ENCODE measurements at regions of chr2 and their contacts with region 1.

Region 1: GRCh38 chr2:72993147-72993932 is 76.0 kb downstream of the EMX1 start:
- DNase-seq: peak in 1 of 3 donors; percentile 68
- ATAC-seq: peak; percentile 54
- H3K4me3 ChIP-seq: no peak overlapping the region
- H3K4me1 ChIP-seq: no peaks in the 10 kb centered on the region
- CTCF ChIP-seq: peak; percentile 52

Region 2: GRCh38 chr2:73163483-73164367 is 170.4 kb after region 1 on chr2:
- intact Hi-C with region 1: loop called in 1 of 2 experiments (anchors 5 kb)
- DNase-seq: peak in 2 of 3 donors; percentile 73 to 74
- ATAC-seq: peak; percentile 88
- H3K4me3 ChIP-seq: no peak overlapping the region
- H3K4me1 ChIP-seq: no peaks in the 10 kb centered on the region
- CTCF ChIP-seq: peak; percentile 67

Measured in mucosa of descending colon (tissue), 3 donors.